Panc1 (cell line): ENCODE measurements at regions of chr11 and their contacts with region 1.

Region 1: DNA sequence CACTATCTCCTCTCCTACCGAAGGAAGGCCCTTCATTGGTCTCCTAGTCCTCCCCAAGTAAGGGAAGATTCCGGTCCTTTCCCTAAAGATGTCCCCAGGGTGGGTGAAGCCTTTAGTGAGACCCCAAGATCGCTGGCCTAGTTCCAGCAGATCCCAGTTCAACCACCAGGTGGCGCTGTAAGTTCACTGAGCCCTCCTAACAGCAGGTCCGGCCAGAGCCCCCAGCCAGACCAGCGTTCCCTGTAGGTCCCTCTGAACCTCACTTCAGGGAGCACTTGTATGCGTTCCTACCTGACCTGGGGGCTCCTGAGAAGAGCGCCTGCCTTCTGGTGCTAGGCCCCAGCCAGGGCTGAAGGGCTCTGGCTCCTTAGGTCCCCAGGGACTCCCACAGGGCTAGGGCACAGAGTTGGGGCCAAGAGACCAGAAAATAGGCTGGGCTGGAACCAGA is 38.1 kb downstream of the LMO1 start:
- DNase-seq: peak; percentile 55
- ATAC-seq: peak; percentile 81
- H3K4me3 ChIP-seq: no peak overlapping the region
- H3K27ac ChIP-seq: no peak overlapping the region
- H3K4me1 ChIP-seq: no peaks in the 10 kb centered on the region
- H3K27me3 ChIP-seq: no peaks in the 10 kb centered on the region
- CTCF ChIP-seq: peak; percentile 99

Region 2: GRCh38 chr11:8258784-8259183 is 33.2 kb after region 1 on chr11:
- CTCF ChIA-PET with region 1: interaction called, 10 read pairs
- POLR2A ChIA-PET with region 1: no interaction called
- in situ Hi-C with region 1: no loop called
- intact Hi-C with region 1: loop called (anchors 1 kb)
- DNase-seq: no peak
- ATAC-seq: no peak
- H3K4me3 ChIP-seq: no peak overlapping the region
- H3K27ac ChIP-seq: no peak overlapping the region
- H3K4me1 ChIP-seq: peaks cover 6% of the 10 kb centered on the region
- H3K27me3 ChIP-seq: peaks cover 22% of the 10 kb centered on the region
- CTCF ChIP-seq: no peak

Region 3: GRCh38 chr11:8318336-8318935 is 92.8 kb after region 1 on chr11:
- CTCF ChIA-PET with region 1: no interaction called
- POLR2A ChIA-PET with region 1: no interaction called
- in situ Hi-C with region 1: no loop called
- intact Hi-C with region 1: loop called (anchors 10 kb)
- DNase-seq: no peak
- ATAC-seq: 0 out of 2 replicates have a peak, but pooled peaks have one; percentile 42
- H3K4me3 ChIP-seq: no peak overlapping the region
- H3K27ac ChIP-seq: no peak overlapping the region
- H3K4me1 ChIP-seq: no peaks in the 10 kb centered on the region
- H3K27me3 ChIP-seq: peaks cover 15% of the 10 kb centered on the region
- CTCF ChIP-seq: peak; percentile 63; the same call in 1 of the 2 replicates

Region 4: GRCh38 chr11:8652140-8652539 is 426.5 kb after region 1 on chr11:
- CTCF ChIA-PET with region 1: no interaction called
- POLR2A ChIA-PET with region 1: no interaction called
- in situ Hi-C with region 1: no loop called
- intact Hi-C with region 1: no loop called
- DNase-seq: peak; percentile 13
- ATAC-seq: no peak
- H3K4me3 ChIP-seq: no peak overlapping the region
- H3K27ac ChIP-seq: no peak overlapping the region
- H3K4me1 ChIP-seq: no peaks in the 10 kb centered on the region
- H3K27me3 ChIP-seq: no peaks in the 10 kb centered on the region
- CTCF ChIP-seq: no peak